AG04449 (cell line): ENCODE measurements at regions of chr2 and their contacts with region 1.

Region 1: GRCh38 chr2:1550658-1551316 is 137.5 kb downstream of the TPO start:
- DNase-seq: no peak
- H3K4me3 ChIP-seq: no peak overlapping the region; the same call in 1 of the 2 replicates
- CTCF ChIP-seq: peak; percentile 98

Region 2: DNA sequence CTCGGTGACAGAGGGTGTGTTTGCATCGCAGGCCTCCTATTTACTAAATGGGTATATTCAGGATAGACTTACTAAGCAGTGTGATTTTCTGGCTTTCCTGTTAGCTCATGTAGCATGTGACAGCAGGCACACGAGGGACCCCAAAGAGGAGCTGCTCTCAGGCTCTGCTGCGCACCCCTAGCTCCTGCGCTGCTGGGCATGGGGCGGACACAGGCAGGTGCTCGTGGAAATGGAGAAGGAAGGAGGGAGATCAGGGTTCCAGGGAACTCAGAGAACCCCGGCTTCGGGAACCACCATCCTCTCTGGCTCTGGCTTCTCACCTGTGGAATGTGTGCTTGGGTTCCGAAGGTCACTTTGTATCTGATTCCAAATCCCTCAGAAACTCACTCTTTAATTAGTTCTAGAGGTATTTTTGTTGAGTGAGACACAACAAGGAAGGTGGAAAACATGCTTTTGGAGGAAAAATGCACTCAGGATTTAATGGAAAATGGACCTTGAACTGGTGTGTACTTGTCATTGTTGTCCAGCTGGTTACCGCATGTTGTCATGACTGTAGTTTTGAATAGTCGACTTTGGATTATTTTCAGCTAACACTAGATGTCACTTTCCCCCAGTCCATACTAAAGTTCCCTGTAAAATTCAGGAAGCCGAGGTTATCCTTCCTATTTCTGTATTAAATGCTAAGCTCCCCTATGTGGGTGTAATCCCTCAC is 596.7 kb before region 1 on chr2:
- CTCF ChIA-PET with region 1: interaction called, 55 read pairs
- POLR2A ChIA-PET with region 1: no interaction called
- DNase-seq: no peak
- H3K4me3 ChIP-seq: no peak overlapping the region
- CTCF ChIP-seq: peak; percentile 20

Region 3: GRCh38 chr2:1584691-1585485 is 34.1 kb after region 1 on chr2:
- CTCF ChIA-PET with region 1: interaction called, 17 read pairs
- POLR2A ChIA-PET with region 1: no interaction called
- DNase-seq: no peak
- H3K4me3 ChIP-seq: no peak overlapping the region
- CTCF ChIP-seq: no peak

Region 4: GRCh38 chr2:1717113-1717512 is 166.3 kb after region 1 on chr2:
- CTCF ChIA-PET with region 1: no interaction called
- POLR2A ChIA-PET with region 1: no interaction called
- DNase-seq: no peak
- H3K4me3 ChIP-seq: no peak overlapping the region
- CTCF ChIP-seq: no peak

Region 5: GRCh38 chr2:1742681-1743395 is 192.1 kb after region 1 on chr2:
- CTCF ChIA-PET with region 1: interaction called, 26 read pairs
- POLR2A ChIA-PET with region 1: no interaction called
- DNase-seq: no peak
- H3K4me3 ChIP-seq: peak overlapping the region; percentile 75
- CTCF ChIP-seq: peak; percentile 71

Region 6: GRCh38 chr2:1769703-1770422 is 219.1 kb after region 1 on chr2:
- CTCF ChIA-PET with region 1: interaction called, 45 read pairs
- POLR2A ChIA-PET with region 1: no interaction called
- DNase-seq: no peak
- H3K4me3 ChIP-seq: no peak overlapping the region
- CTCF ChIP-seq: peak; percentile 77

Region 7: GRCh38 chr2:2146969-2147900 is 596.4 kb after region 1 on chr2:
- CTCF ChIA-PET with region 1: no interaction called
- POLR2A ChIA-PET with region 1: no interaction called
- DNase-seq: no peak
- H3K4me3 ChIP-seq: no peak overlapping the region
- CTCF ChIP-seq: no peak